ENCODE measurements at regions of chr20 and their contacts with region 1.

Region 1: DNA sequence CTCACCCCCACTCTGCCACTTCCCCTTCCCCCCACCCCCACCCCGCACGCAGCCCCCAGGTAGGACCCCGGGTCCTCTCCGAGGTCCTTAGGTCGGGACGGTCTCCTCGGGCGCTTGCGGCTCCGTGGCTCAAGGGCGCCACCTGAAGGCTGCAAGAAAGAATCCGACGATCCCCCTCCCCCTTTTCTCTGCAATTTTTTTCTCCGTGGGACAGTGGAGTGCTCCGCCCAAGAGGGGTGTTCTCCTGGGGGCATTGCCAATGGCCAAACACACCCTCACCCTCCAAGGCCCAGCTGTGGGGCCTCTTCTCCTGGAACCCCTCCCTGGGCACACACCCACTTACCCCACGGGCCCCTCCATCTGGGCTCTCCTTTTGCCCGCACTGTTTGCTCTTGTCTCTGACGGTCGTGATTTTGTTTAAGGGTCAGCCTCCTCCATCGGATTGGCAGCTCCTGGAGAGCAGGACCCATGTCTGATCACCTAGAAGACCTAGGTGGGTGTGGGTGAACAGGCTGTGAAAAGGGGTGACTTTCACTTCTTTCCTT is 1.1 kb upstream of the TMEM74B start:
- DNase-seq: peak; percentile 45
- H3K4me3 ChIP-seq: peak overlapping the region; percentile 50
- H3K27ac ChIP-seq: no peak overlapping the region
- H3K4me1 ChIP-seq: no peaks in the 10 kb centered on the region
- H3K27me3 ChIP-seq: peaks cover 14% of the 10 kb centered on the region
- CTCF ChIP-seq: peak; percentile 54

Region 2: GRCh38 chr20:1122388-1123315 is 63.2 kb before region 1 on chr20:
- intact Hi-C with region 1: loop called (anchors 10 kb)
- DNase-seq: peak; percentile 75
- H3K4me3 ChIP-seq: no peak overlapping the region
- H3K27ac ChIP-seq: peak overlapping the region; percentile 50
- H3K4me1 ChIP-seq: peaks cover 23% of the 10 kb centered on the region
- H3K27me3 ChIP-seq: no peaks in the 10 kb centered on the region
- CTCF ChIP-seq: no peak

Region 3: GRCh38 chr20:1242530-1242929 is 56.7 kb after region 1 on chr20:
- intact Hi-C with region 1: no loop called
- DNase-seq: no peak
- H3K4me3 ChIP-seq: no peak overlapping the region
- H3K27ac ChIP-seq: no peak overlapping the region
- H3K4me1 ChIP-seq: no peaks in the 10 kb centered on the region
- H3K27me3 ChIP-seq: no peaks in the 10 kb centered on the region
- CTCF ChIP-seq: no peak

Measured in colonic mucosa (tissue), 4 donors.